GM18951 (cell line): ENCODE measurements at regions of chr17 and their contacts with region 1.

Region 1: GRCh38 chr17:17356149-17356930 is 53.2 kb downstream of the NT5M start:
- POLR2A ChIP-seq: no peak

Region 2: GRCh38 chr17:17315142-17315821 is 41.1 kb before region 1 on chr17:
- in situ Hi-C with region 1: no loop called
- POLR2A ChIP-seq: no peak

Region 3: DNA sequence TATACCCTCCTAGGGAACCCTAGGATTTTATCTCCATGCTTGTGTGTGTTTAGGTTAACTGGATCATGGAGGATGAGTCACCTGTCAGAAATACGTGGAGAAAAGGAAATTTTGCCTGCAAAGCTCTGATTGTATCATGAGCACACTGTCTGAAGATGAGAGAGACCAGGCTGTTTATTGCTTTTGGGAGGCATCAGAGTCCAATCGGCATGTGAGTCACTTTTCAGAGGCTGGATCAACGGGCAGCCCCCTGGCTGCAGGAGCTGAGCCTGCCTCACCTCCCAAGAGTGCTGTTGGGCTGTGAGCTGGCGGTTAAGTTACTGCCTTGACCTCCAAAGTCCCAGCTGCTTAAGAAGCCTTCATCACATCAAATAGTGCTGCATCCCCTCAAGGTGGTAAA is 79.0 kb after region 1 on chr17:
- in situ Hi-C with region 1: loop called (anchors 10 kb)
- POLR2A ChIP-seq: no peak